Activated CD4-positive, alpha-beta memory T cell treated with anti-CD3 and anti-CD28 coated beads, Interleukin-2, amount 10 ng/mL, durations not matched to agents 7 days and 5 days (primary cell): ENCODE measurements at regions of chr13 and their contacts with region 1.

Region 1: GRCh38 chr13:110915057-110915873 is at the start of gene ANKRD10:
- DNase-seq: peak; percentile 97
- H3K4me3 Mint-ChIP-seq: peak within 1 kb of the TSS; percentile 89
- H3K27ac Mint-ChIP-seq: peak within 1 kb of the TSS; percentile 94
- H3K4me1 Mint-ChIP-seq: peaks cover 48% of the 10 kb centered on the region
- H3K27me3 Mint-ChIP-seq: no peaks in the 10 kb centered on the region
- total RNA-seq, gene ANKRD10: 127 to 129 TPM

Region 2: GRCh38 chr13:110705826-110706569 is 209.3 kb before region 1 on chr13 and contains the start of gene CARS2:
- CTCF ChIA-PET with region 1: no interaction called
- POLR2A ChIA-PET with region 1: interaction called, 33 read pairs
- DNase-seq: peak; percentile 95
- H3K4me3 Mint-ChIP-seq: peak within 1 kb of the TSS; percentile 93
- H3K27ac Mint-ChIP-seq: peak within 1 kb of the TSS; percentile 86
- H3K4me1 Mint-ChIP-seq: peaks cover 45% of the 10 kb centered on the region
- H3K27me3 Mint-ChIP-seq: no peaks in the 10 kb centered on the region
- total RNA-seq, gene CARS2: 51.8 to 53.5 TPM

Region 3: DNA sequence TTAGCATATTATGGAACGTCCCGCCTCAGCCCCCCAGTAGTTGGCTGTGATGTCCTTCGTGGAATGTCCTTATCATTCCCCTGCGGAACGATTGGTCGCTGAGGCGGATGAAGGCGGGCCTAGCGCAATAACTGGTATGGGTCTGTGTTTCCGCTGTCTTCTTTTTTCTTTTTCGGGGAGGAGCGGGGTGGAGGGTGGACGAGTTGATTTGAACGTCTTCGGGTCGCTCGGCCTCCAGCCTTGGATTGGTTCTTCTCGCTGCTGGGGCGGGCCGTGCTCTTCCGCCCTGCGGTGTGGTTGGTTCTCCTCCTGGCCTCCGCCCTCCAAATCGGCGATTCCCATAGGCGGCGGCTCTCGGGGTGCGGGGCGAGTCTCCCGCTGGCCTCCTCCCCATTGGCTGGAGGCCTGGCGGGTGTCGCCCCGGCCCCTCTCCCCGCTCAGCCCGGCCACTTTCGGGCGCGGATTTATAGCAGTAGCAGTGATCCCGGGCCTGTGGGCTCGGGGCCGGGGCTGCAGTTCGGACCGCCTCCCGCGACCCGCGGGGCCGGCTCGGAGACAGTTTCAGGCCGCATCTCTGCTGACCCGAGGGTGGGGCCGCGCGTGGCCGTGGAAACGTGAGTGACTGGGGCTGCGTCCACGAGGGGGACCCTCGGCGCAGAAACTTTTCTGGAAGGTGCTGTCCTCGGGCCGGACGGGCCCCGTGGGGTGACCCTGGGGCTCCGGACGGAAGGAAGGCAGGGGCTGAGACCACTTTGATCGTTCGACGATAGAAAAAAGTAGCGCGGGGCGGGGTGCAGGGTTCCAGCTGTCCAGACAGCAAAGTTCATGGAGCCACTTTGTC is 199.7 kb before region 1 on chr13:
- CTCF ChIA-PET with region 1: interaction called, 6 read pairs
- POLR2A ChIA-PET with region 1: interaction called, 33 read pairs
- DNase-seq: peak; percentile 96
- H3K4me3 Mint-ChIP-seq: peak overlapping the region; percentile 89
- H3K27ac Mint-ChIP-seq: peak overlapping the region; percentile 93
- H3K4me1 Mint-ChIP-seq: peaks cover 32% of the 10 kb centered on the region
- H3K27me3 Mint-ChIP-seq: no peaks in the 10 kb centered on the region

Region 4: GRCh38 chr13:110902370-110902769 is 12.9 kb before region 1 on chr13:
- CTCF ChIA-PET with region 1: interaction called, 35 read pairs
- POLR2A ChIA-PET with region 1: interaction called, 33 read pairs
- DNase-seq: no peak
- H3K4me3 Mint-ChIP-seq: no peak overlapping the region
- H3K27ac Mint-ChIP-seq: no peak overlapping the region
- H3K4me1 Mint-ChIP-seq: peaks cover 23% of the 10 kb centered on the region
- H3K27me3 Mint-ChIP-seq: no peaks in the 10 kb centered on the region

Region 5: GRCh38 chr13:111011899-111012298 is 96.6 kb after region 1 on chr13:
- CTCF ChIA-PET with region 1: interaction called, 20 read pairs
- POLR2A ChIA-PET with region 1: interaction called, 31 read pairs
- DNase-seq: peak; percentile 68
- H3K4me3 Mint-ChIP-seq: peak overlapping the region; percentile 2
- H3K27ac Mint-ChIP-seq: peak overlapping the region; percentile 88
- H3K4me1 Mint-ChIP-seq: peaks cover 45% of the 10 kb centered on the region
- H3K27me3 Mint-ChIP-seq: peaks cover 32% of the 10 kb centered on the region

Region 6: DNA sequence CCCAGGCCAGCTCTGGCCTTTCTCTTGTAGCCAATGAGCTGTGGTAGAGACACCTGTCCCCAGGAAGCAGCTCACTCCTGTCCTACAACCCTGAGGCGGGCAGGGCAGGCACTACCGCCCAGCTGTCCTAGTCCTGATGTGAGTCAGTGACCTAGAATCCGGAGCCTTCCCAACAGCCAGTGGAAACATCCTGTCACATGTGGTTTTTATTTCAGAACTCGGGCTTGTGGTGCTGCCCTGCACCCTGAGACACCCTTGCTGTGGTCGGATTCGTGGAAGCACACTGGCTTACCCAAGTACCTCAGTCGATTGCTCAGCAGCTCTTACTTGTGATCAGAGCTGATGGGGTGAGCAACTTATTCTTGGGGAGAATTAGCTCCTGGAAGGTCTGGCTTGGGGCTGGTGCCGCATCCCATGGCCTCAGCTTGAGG is 116.3 kb after region 1 on chr13:
- CTCF ChIA-PET with region 1: interaction called, 10 read pairs
- POLR2A ChIA-PET with region 1: interaction called, 8 read pairs
- DNase-seq: peak; percentile 82
- H3K4me3 Mint-ChIP-seq: peak overlapping the region; percentile 4
- H3K27ac Mint-ChIP-seq: peak overlapping the region; percentile 91
- H3K4me1 Mint-ChIP-seq: peaks cover 40% of the 10 kb centered on the region
- H3K27me3 Mint-ChIP-seq: peaks cover 38% of the 10 kb centered on the region

Region 7: GRCh38 chr13:111046590-111047141 is 131.4 kb after region 1 on chr13:
- CTCF ChIA-PET with region 1: interaction called, 30 read pairs
- POLR2A ChIA-PET with region 1: interaction called, 8 read pairs
- DNase-seq: no peak
- H3K4me3 Mint-ChIP-seq: no peak overlapping the region
- H3K27ac Mint-ChIP-seq: peak overlapping the region; percentile 51
- H3K4me1 Mint-ChIP-seq: peaks cover 25% of the 10 kb centered on the region
- H3K27me3 Mint-ChIP-seq: peaks cover 10% of the 10 kb centered on the region